PC-9 (cell line): ENCODE measurements at regions of chr3 and their contacts with region 1.

Region 1: DNA sequence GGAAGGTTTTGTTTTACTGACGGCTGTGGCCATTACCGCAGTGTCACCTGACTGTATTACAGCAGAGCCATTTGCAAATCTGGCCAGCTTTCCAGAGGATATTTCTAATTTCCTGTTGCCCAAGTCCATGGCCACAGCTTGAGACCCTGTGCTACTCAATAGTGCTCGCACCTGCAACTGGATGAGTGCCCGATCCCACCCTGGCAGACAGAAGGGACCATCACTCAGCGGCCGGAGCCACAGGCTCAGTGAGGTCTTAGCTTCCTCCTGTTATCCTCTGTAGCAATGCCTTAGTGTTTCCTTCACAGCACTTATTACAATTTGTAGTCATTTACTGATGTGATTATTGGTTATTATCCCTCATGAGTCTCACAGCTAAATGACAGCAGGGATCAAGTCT is 184.8 kb downstream of the LRRN1 start:
- DNase-seq: no peak
- H3K4me3 ChIP-seq: no peak overlapping the region
- H3K27ac ChIP-seq: no peak overlapping the region
- H3K4me1 ChIP-seq: no peaks in the 10 kb centered on the region
- H3K27me3 ChIP-seq: no peaks in the 10 kb centered on the region
- CTCF ChIP-seq: no peak

Region 2: GRCh38 chr3:4021162-4021561 is 37.1 kb after region 1 on chr3:
- CTCF ChIA-PET with region 1: no interaction called
- POLR2A ChIA-PET with region 1: no interaction called
- intact Hi-C with region 1: loop called (anchors 1 kb)
- DNase-seq: no peak
- H3K4me3 ChIP-seq: no peak overlapping the region
- H3K27ac ChIP-seq: no peak overlapping the region
- H3K4me1 ChIP-seq: no peaks in the 10 kb centered on the region
- H3K27me3 ChIP-seq: no peaks in the 10 kb centered on the region
- CTCF ChIP-seq: no peak